Cardiac septum (tissue), 1 donor: ENCODE measurements at regions of chr12 and their contacts with region 1.

Region 1: DNA sequence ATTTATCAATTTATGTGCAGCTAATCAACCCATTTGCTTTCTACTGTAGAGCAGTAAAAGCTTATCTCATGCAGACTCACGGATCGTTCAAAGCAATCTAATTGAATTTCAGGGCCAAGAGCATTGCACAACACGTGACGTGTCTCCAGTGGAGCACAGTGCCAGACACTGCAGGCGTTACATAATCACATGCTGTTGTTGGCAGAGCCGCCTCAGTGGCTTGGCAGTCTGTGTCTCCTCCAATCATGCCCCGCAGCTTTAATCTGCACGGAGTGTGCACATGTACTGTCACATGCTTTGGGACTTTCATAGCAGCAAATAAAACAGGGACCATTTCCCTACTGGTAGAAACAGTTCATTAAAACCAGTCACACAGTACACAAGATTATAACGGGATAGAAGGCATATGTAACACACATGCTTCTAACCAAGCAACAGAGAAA is 309.3 kb downstream of the ITPR2 start:
- DNase-seq: peak; percentile 91

Region 2: GRCh38 chr12:26113853-26114719 is 409.6 kb before region 1 on chr12:
- intact Hi-C with region 1: loop called (anchors 10 kb)
- DNase-seq: peak; percentile 94